H1 (cell line): ENCODE measurements at regions of chr12 and their contacts with region 1.

Region 1: GRCh38 chr12:118625050-118625675 is 248.8 kb downstream of the SUDS3 start:
- DNase-seq: no peak
- H3K4me3 ChIP-seq: no peak overlapping the region
- H3K27ac ChIP-seq: no peak overlapping the region
- H3K4me1 ChIP-seq: no peaks in the 10 kb centered on the region
- H3K27me3 ChIP-seq: no peaks in the 10 kb centered on the region
- CTCF ChIP-seq: no peak
- EP300 ChIP-seq: no peak
- POLR2A ChIP-seq: no peak
- RAD21 ChIP-seq: no peak

Region 2: GRCh38 chr12:118446244-118446643 is 178.9 kb before region 1 on chr12:
- CTCF ChIA-PET with region 1: interaction called, 13 read pairs
- POLR2A ChIA-PET with region 1: no interaction called
- DNase-seq: no peak
- H3K4me3 ChIP-seq: no peak overlapping the region
- H3K27ac ChIP-seq: no peak overlapping the region
- H3K4me1 ChIP-seq: no peaks in the 10 kb centered on the region
- H3K27me3 ChIP-seq: no peaks in the 10 kb centered on the region
- CTCF ChIP-seq: peak in 2 of 3 experiments; percentile 13 to 20; a peak in 3 of 4 replicates
- EP300 ChIP-seq: no peak
- POLR2A ChIP-seq: no peak
- RAD21 ChIP-seq: peak; percentile 16 to 50; a peak in 3 of 4 replicates

Region 3: GRCh38 chr12:118611295-118611694 is 13.9 kb before region 1 on chr12:
- CTCF ChIA-PET with region 1: interaction called, 26 read pairs
- POLR2A ChIA-PET with region 1: interaction called, 3 read pairs
- DNase-seq: no peak
- H3K4me3 ChIP-seq: no peak overlapping the region
- H3K27ac ChIP-seq: no peak overlapping the region
- H3K4me1 ChIP-seq: peaks cover 0 to 5% (median 4%) of the 10 kb centered on the region in 4 experiments; a peak in 3 of 7 replicates
- H3K27me3 ChIP-seq: no peaks in the 10 kb centered on the region
- CTCF ChIP-seq: no peak
- EP300 ChIP-seq: no peak
- POLR2A ChIP-seq: no peak
- RAD21 ChIP-seq: no peak